ENCODE measurements at regions of chr15 and their contacts with region 1.

Region 1: DNA sequence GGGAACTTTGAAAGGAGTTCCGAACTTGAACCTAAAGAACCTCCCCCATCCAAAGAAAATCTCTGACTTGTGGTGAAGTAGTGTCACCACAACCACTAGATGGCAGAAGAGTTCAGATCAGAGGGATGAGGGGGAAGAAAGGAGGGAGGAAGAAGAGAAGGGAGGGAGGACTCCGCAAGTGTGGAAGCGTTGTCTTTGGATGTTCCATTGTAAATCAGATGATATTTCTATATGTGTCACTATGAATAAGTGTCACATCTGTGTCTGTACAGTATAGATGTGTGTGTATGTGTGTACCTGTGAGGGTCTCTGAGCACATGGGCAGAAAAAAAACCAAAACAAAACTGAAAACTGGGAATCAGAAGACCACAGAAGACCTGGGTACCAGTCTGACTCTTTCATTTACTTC is 16.9 kb downstream of the SLC24A1 start:
- DNase-seq: peak; percentile 80
- CTCF ChIP-seq: peak; percentile 64

Region 2: DNA sequence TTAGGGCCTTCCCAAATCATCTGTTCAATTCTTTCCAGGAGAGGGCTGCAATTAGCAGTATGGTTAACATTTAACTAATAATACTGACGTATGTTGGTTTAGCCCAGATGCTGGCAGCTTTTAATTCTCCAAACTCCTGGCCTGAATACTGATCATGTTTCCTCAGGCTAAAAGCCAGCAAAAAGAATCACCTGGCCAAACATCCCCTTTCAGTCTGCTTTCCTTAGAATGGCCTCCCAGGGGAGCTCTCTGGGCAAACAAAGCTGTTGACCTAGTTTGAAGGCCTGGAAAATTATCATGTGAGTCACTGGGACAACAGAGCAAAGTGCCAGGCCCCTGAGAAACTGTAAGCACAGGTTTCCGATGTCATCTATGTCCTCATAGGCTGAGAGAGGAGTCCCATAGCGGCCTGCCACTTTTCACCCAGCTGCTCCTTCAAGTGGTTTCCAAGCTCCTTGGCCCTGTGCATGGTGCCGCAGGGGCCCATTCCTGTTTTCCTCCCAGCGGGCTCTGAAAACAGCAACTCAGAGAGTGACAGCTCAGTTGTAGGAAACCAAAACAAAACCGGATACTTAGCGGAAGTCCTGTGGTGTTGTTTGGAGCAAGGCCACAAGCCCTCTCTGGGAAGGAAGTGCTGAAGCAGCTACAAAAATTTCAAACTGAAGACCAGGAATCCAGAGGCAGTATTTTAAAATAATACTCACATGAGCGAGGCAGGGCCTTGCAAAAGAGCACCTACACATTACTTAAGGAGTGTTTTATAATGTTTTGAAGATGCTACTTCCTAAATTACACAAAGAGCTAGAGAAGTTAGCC is 194.1 kb after region 1 on chr15:
- in situ Hi-C with region 1: loop called (anchors 10 kb)
- DNase-seq: no peak
- CTCF ChIP-seq: no peak

Region 3: GRCh38 chr15:66080717-66081398 is 442.2 kb after region 1 on chr15:
- in situ Hi-C with region 1: loop called (anchors 25 kb)
- DNase-seq: no peak
- CTCF ChIP-seq: no peak

Region 4: DNA sequence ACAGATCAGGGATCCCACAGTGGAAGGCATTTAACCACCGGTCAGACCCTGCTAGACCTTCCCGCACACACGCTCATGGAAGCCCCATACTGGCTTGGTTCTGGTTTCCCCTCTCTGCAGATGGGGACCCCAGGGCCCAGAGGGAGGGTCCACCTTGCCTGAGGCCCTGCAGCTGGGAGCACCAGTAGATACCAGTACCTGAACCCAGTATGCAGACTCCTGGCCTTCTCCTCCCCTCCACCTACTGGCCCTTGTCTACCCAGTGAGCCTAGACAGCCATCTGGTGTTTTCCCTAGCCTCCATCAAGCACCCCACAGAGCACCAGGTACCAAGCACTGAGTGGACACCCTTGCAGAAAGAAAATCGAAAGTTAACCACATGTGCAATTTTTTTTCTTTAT is 549.8 kb after region 1 on chr15:
- in situ Hi-C with region 1: loop called (anchors 25 kb)
- DNase-seq: no peak
- CTCF ChIP-seq: no peak